ENCODE measurements at regions of chr11 and their contacts with region 1.

Region 1: DNA sequence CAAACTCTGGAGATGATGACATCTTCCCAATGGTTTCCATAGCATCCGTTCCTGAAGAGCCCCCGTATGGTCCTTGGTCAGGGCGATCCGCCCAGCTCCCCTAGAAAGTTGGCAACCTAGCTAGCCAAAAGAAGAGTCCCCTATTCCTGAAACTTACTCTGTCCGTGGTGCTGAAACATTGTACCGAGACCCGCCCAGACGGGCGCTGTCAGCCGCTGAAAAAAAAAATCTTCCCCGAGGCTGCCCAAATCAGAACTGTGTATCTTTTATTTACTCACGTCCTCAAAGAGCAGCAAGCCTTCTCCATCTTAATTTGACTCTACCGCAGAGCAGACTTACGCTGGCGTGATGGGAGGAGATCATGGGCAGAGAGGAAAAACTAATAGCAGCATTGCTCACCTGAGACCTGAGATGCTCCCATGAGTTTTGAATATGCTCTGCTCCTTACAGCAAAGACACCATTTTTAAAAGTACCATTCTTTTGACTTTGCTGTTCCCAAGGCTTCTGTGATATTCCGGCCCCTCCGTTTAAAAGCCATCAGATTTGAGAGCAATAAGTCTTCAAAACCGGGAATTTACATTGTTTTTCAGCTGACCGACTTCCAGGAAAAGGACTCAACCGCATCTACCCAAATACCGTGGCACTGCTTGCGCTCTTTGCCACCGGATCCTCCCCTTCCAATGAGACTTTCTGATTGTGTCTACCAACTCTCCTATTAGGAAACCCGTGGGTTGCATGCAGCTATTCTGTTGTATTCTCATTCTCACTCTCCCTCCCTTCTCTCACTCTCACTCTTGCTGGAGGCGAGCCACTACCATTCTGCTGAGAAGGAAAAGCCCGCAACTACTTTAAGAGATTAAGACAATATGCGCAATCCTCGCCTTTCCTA is at the start of gene SLC17A6:
- DNase-seq: peak; percentile 21
- ATAC-seq: peak; percentile 56; the same call in 2 of the 3 replicates
- H3K4me3 ChIP-seq: no peak within 1 kb of the TSS
- H3K27ac ChIP-seq: no peak within 1 kb of the TSS
- H3K4me1 ChIP-seq: no peaks in the 10 kb centered on the region
- H3K27me3 ChIP-seq: peaks cover 5 to 29% of the 10 kb centered on the region in 2 experiments; a peak in 3 of 5 replicates
- CTCF ChIP-seq: no peak
- EP300 ChIP-seq: no peak
- POLR2A ChIP-seq: no peak
- RAD21 ChIP-seq: no peak
- total RNA-seq, gene SLC17A6: not detected in 2 replicates

Region 2: GRCh38 chr11:22371160-22371559 is 33.3 kb after region 1 on chr11:
- CTCF ChIA-PET with region 1: no interaction called
- POLR2A ChIA-PET with region 1: no interaction called
- in situ Hi-C with region 1: no loop called
- intact Hi-C with region 1: loop called (anchors 1 kb)
- DNase-seq: no peak
- ATAC-seq: no peak
- H3K4me3 ChIP-seq: no peak overlapping the region
- H3K27ac ChIP-seq: no peak overlapping the region
- H3K4me1 ChIP-seq: no peaks in the 10 kb centered on the region
- H3K27me3 ChIP-seq: no peaks in the 10 kb centered on the region
- CTCF ChIP-seq: no peak
- EP300 ChIP-seq: no peak
- POLR2A ChIP-seq: no peak
- RAD21 ChIP-seq: no peak

Region 3: GRCh38 chr11:22539821-22540256 is 202.0 kb after region 1 on chr11:
- CTCF ChIA-PET with region 1: no interaction called
- POLR2A ChIA-PET with region 1: no interaction called
- in situ Hi-C with region 1: loop called (anchors 10 kb)
- intact Hi-C with region 1: loop called (anchors 1 kb)
- DNase-seq: peak; percentile 9
- ATAC-seq: peak; percentile 76
- H3K4me3 ChIP-seq: no peak overlapping the region
- H3K27ac ChIP-seq: no peak overlapping the region
- H3K4me1 ChIP-seq: no peaks in the 10 kb centered on the region
- H3K27me3 ChIP-seq: no peaks in the 10 kb centered on the region
- CTCF ChIP-seq: peak; percentile 52
- EP300 ChIP-seq: no peak
- POLR2A ChIP-seq: no peak
- RAD21 ChIP-seq: no peak

Region 4: GRCh38 chr11:22730319-22730718 is 392.5 kb after region 1 on chr11:
- CTCF ChIA-PET with region 1: no interaction called
- POLR2A ChIA-PET with region 1: no interaction called
- in situ Hi-C with region 1: no loop called
- intact Hi-C with region 1: loop called (anchors 2 kb)
- DNase-seq: peak; percentile 59
- ATAC-seq: peak; percentile 56
- H3K4me3 ChIP-seq: no peak overlapping the region
- H3K27ac ChIP-seq: no peak overlapping the region
- H3K4me1 ChIP-seq: peaks cover 10% of the 10 kb centered on the region
- H3K27me3 ChIP-seq: no peaks in the 10 kb centered on the region
- CTCF ChIP-seq: peak; percentile 35
- EP300 ChIP-seq: no peak
- POLR2A ChIP-seq: no peak
- RAD21 ChIP-seq: peak; percentile 48

Region 5: GRCh38 chr11:22829231-22830081 is 491.6 kb after region 1 on chr11 and contains the start of gene SVIP:
- CTCF ChIA-PET with region 1: no interaction called
- POLR2A ChIA-PET with region 1: no interaction called
- in situ Hi-C with region 1: no loop called
- intact Hi-C with region 1: loop called (anchors 5 kb)
- DNase-seq: peak; percentile 87
- ATAC-seq: peak; percentile 94
- H3K4me3 ChIP-seq: peak within 1 kb of the TSS; percentile 78 to 99 (median 82)
- H3K27ac ChIP-seq: peak within 1 kb of the TSS; percentile 89
- H3K4me1 ChIP-seq: peaks cover 44% of the 10 kb centered on the region
- H3K27me3 ChIP-seq: no peaks in the 10 kb centered on the region; a peak in 1 of 5 replicates
- CTCF ChIP-seq: peak; percentile 91
- EP300 ChIP-seq: peak in 1 of 2 experiments; percentile 38; a peak in 1 of 4 replicates
- POLR2A ChIP-seq: peak; percentile 84
- RAD21 ChIP-seq: no peak
- total RNA-seq, gene SVIP: 27.2 and 31.1 TPM in 2 replicates